ENCODE measurements at regions of chr7 and their contacts with region 1.

Region 1: DNA sequence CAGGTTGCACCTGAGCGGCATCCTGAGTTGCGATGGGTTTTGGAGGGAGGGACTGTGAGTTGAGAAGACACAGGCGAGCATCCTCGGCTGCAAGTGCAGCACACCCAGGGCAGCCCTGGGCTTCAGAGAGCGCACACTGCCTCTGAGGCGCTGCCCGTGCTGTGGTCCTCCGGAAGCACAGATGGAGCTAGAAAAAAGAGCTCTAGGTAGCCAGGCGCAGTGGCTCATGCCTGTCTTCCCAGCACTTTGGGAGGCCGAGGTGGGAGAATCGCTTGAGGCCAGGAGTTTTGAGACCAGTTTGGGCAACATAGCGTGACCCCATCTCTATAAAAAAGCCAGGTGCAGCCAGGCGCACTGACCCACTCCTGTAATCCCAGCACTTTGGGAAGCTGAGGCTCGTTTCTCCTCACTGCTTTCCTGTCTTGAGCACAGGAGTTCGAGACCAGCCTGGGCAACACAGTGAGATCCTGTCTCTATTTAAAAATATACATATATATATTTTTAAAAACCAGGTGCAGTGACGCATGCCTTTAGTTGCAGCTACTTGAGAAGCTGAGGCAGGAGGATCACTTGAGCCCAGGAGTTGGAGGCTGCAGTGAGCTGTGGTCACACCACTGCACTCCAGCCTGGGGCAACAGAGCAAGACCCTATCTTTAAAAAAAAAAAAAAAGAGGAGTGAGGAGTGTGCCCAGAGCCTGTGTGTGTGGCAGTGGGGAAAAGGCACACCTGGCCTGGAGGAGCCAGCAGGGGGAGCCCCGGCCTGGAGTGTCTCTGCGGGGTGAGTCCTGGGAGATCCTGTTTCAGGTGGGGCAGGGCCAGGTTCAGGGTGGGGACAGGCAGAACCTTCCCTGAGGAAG is 9.3 kb upstream of the ARPC1B start:
- DNase-seq: peak; percentile 56 to 80
- H3K4me3 ChIP-seq: no peak overlapping the region
- H3K27ac ChIP-seq: no peak overlapping the region
- H3K4me1 ChIP-seq: no peaks in the 10 kb centered on the region
- H3K27me3 ChIP-seq: no peaks in the 10 kb centered on the region
- CTCF ChIP-seq: peak; percentile 69

Region 2: DNA sequence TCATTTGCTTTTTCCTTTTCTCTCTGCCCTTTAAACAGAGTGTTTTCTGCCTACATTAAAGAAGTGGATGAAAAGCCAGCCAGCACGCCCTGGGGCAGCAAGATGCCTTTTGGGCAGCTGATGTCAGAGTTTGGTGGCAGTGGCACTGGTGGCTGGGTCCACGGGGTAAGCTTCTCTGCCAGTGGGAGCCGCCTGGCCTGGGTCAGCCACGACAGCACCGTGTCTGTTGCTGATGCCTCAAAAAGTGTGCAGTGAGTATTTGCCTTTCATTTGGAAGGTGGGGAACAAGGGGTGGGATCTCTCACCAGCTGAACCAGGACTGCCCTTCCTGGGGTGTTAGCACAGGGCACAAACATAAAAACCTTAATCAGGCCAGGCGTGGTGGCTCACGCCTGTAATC is 11.3 kb before region 1 on chr7:
- CTCF ChIA-PET with region 1: interaction called, 10 read pairs
- POLR2A ChIA-PET with region 1: no interaction called
- intact Hi-C with region 1: no loop called
- DNase-seq: no peak
- H3K4me3 ChIP-seq: no peak overlapping the region
- H3K27ac ChIP-seq: no peak overlapping the region
- H3K4me1 ChIP-seq: no peaks in the 10 kb centered on the region
- H3K27me3 ChIP-seq: no peaks in the 10 kb centered on the region
- CTCF ChIP-seq: no peak

Region 3: GRCh38 chr7:99386584-99387238 is 21.5 kb after region 1 on chr7:
- CTCF ChIA-PET with region 1: interaction called, 3 read pairs
- POLR2A ChIA-PET with region 1: no interaction called
- intact Hi-C with region 1: loop called (anchors 1 kb)
- DNase-seq: no peak
- H3K4me3 ChIP-seq: no peak overlapping the region
- H3K27ac ChIP-seq: no peak overlapping the region
- H3K4me1 ChIP-seq: no peaks in the 10 kb centered on the region
- H3K27me3 ChIP-seq: no peaks in the 10 kb centered on the region
- CTCF ChIP-seq: no peak

Region 4: DNA sequence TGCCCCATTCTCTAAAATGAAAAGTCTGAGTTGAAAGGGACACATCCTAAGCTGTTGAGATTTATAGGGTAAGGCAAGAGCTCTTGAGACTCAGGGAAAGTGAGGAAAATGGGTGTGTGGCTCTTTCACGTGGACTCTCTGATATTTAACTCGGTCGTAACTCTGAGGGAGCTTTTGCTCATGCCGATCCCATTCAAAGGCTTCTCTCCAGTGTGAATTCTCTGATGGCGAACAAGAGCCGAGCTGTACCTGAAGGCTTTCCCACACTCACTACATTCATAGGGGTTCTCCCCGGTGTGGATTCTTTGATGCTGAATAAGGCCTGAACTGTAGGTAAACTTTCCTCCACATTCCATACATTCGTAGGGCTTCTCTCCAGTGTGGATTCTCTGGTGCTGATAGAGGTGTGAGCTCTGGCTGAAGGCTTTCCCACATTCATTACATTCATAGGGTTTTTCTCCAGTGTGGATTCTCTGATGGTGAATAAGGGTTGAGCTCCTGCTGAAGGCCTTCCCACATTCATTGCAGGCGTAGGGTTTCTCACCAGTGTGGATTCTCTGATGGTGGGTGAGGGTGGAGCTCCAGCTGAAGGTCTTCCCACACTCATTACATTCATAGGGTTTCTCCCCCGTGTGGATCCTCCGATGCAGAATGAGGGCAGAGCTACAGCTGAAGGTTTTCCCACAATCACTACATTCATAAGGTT is 706.0 kb after region 1 on chr7:
- CTCF ChIA-PET with region 1: no interaction called
- POLR2A ChIA-PET with region 1: no interaction called
- intact Hi-C with region 1: no loop called
- DNase-seq: no peak
- H3K4me3 ChIP-seq: no peak overlapping the region
- H3K27ac ChIP-seq: no peak overlapping the region
- H3K4me1 ChIP-seq: no peaks in the 10 kb centered on the region
- H3K27me3 ChIP-seq: no peaks in the 10 kb centered on the region
- CTCF ChIP-seq: no peak

Measured in PC-9 (cell line).